K562 (cell line): ENCODE measurements at regions of chr12 and their contacts with region 1.

Region 1: DNA sequence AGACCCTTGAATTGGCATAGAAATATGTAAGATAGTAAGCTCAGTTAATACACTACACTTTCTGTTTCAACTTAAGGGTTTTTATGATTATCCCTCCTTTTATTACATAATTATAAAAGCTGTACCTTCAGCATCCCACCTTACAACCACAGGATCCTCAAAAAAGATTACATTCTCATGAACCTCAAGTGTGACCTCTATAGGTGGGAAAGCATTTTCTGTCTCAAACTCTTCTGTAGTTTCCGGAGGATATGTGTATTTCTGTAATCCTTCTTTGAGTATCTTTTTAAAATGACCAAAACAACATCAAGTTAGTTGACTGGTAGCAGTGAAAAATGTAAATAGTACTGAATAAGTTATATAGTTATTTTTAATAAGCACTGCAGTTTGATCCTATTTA is 75.9 kb downstream of the DNAI7 start:
- DNase-seq: no peak
- ATAC-seq: peak; percentile 40; the same call in 1 of the 3 replicates
- H3K4me3 ChIP-seq: no peak overlapping the region
- H3K27ac ChIP-seq: no peak overlapping the region
- H3K4me1 ChIP-seq: no peaks in the 10 kb centered on the region
- H3K27me3 ChIP-seq: no peaks in the 10 kb centered on the region; a peak in 1 of 5 replicates
- CTCF ChIP-seq: peak in 1 of 3 experiments; percentile 37; a peak in 2 of 6 replicates
- EP300 ChIP-seq: no peak
- POLR2A ChIP-seq: no peak
- RAD21 ChIP-seq: peak; percentile 20 to 54; a peak in 2 of 4 replicates

Region 2: DNA sequence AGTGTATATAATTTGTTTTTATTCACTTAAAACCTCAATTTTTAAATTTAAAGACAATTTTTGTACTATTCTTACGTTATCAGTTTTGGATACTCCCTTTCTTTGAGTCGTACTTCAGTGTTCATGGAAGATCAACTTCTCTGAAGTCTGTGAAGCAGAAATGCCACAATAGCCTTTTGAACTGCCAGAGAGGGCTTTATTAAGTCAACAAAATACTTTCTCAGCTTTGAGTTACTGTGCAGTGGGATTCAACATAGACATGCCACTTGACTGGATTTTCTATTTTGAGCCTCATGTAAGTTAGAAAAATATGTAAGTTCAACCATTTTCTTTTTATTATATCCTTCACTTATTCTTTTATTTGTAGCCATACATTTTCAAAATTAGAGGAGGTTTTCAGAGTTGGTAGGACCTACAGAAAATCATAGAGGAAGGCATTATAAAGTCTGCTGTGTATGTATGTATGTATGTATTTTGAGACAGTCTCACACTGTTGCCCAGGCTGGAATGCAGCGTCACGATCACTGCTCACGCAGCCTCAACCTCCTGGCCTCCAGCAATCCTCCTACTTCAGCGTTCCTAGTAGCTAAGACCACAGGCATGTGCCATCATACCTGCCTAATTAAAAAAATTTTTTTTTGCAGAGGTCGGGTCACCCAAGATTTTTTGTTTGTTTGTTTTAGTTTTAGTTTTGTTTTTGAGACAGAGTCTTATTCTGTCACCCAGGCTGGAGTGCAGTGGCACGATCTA is 138.9 kb before region 1 on chr12:
- CTCF ChIA-PET with region 1: no interaction called
- POLR2A ChIA-PET with region 1: no interaction called
- in situ Hi-C with region 1: loop called (anchors 10 kb)
- intact Hi-C with region 1: no loop called
- DNase-seq: peak in 1 of 4 experiments; percentile 10
- ATAC-seq: no peak
- H3K4me3 ChIP-seq: no peak overlapping the region
- H3K27ac ChIP-seq: no peak overlapping the region
- H3K4me1 ChIP-seq: peaks cover 0 to 2% of the 10 kb centered on the region in 2 experiments; a peak in 2 of 5 replicates
- H3K27me3 ChIP-seq: no peaks in the 10 kb centered on the region; a peak in 1 of 5 replicates
- CTCF ChIP-seq: no peak
- EP300 ChIP-seq: no peak
- POLR2A ChIP-seq: no peak
- RAD21 ChIP-seq: no peak

Region 3: GRCh38 chr12:25052196-25052913 is 66.7 kb before region 1 on chr12:
- CTCF ChIA-PET with region 1: no interaction called
- POLR2A ChIA-PET with region 1: no interaction called
- in situ Hi-C with region 1: no loop called
- intact Hi-C with region 1: loop called (anchors 10 kb)
- DNase-seq: peak in 2 of 4 experiments; percentile 12 to 59
- ATAC-seq: peak; percentile 86
- H3K4me3 ChIP-seq: peak overlapping the region; percentile 17
- H3K27ac ChIP-seq: peak overlapping the region; percentile 63; the same call in 2 of the 3 replicates
- H3K4me1 ChIP-seq: no peaks in the 10 kb centered on the region; a peak in 2 of 5 replicates
- H3K27me3 ChIP-seq: peaks cover 3 to 4% of the 10 kb centered on the region in 2 experiments; a peak in 2 of 5 replicates
- CTCF ChIP-seq: no peak
- EP300 ChIP-seq: no peak
- POLR2A ChIP-seq: no peak
- RAD21 ChIP-seq: no peak

Region 4: DNA sequence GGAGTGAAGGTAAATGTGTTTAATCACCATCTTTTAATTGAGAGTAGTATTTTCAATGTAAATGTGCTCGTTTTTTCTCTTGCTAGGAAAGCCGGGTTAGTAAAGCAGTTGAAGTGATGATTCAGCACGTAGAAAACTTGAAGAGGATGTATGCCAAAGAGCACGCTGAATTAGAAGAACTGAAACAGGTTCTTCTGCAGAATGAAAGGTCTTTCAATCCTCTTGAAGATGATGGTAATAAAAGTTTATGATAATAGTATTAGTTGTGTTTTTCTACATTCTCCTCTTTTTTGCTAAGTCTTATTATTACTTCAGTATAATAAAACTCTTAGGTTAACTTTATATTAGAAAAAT is 18.0 kb before region 1 on chr12:
- CTCF ChIA-PET with region 1: no interaction called
- POLR2A ChIA-PET with region 1: no interaction called
- in situ Hi-C with region 1: no loop called
- intact Hi-C with region 1: no loop called
- DNase-seq: no peak
- ATAC-seq: no peak
- H3K4me3 ChIP-seq: no peak overlapping the region
- H3K27ac ChIP-seq: no peak overlapping the region
- H3K4me1 ChIP-seq: no peaks in the 10 kb centered on the region
- H3K27me3 ChIP-seq: no peaks in the 10 kb centered on the region
- CTCF ChIP-seq: no peak
- EP300 ChIP-seq: no peak
- POLR2A ChIP-seq: no peak
- RAD21 ChIP-seq: no peak

Region 5: GRCh38 chr12:25186788-25187397 is 67.9 kb after region 1 on chr12:
- CTCF ChIA-PET with region 1: no interaction called
- POLR2A ChIA-PET with region 1: no interaction called
- in situ Hi-C with region 1: no loop called
- intact Hi-C with region 1: no loop called
- DNase-seq: no peak
- ATAC-seq: no peak
- H3K4me3 ChIP-seq: no peak overlapping the region
- H3K27ac ChIP-seq: no peak overlapping the region
- H3K4me1 ChIP-seq: no peaks in the 10 kb centered on the region
- H3K27me3 ChIP-seq: no peaks in the 10 kb centered on the region; a peak in 1 of 5 replicates
- CTCF ChIP-seq: no peak
- EP300 ChIP-seq: no peak
- POLR2A ChIP-seq: no peak
- RAD21 ChIP-seq: no peak